Body of pancreas (tissue), 4 donors: ENCODE measurements at regions of chrX and their contacts with region 1.

Region 1: DNA sequence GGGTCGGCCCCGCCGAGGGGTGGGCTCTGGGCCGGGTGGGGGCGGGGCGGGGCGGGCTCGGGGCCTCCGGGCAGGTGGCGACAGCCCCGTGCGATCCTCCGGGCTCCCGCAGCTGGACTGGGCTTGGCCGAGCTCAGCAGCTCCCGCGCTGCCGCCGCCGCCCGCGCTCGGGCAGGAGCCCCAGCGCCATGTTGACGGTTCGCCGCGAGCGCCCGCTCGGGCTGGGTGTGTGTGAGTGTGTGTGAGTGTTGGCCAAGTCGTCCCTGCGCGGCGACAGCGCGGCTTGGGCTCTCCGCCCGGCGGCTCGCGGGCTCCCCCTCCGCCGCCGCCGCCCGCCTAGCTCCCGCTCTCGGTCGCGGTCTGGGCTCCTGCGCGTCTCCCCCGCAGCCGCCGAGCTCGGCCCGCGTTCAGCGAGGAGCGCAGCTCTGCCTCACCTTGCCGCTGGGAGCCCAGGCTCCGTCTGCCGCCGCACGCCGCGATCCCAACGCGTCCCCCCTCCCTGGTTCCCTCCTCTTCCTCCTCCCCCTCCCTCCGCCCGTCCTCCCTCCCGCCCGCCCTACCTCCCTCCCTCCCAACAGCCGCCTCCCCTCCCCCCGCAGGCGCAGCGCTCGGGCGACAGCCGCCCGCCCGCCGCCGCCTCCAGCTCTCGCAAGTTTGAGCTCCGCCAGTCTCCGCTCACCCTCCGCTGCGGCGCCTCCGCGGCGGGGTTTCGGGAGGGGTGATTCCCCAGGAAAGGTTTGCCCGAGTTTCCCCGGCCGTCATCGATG is at the start of gene BCOR:
- DNase-seq: peak; percentile 79 to 85 (median 82)
- ATAC-seq: peak; percentile 76
- H3K4me3 ChIP-seq: peak within 1 kb of the TSS; percentile 18 to 39
- H3K27ac ChIP-seq: peak within 1 kb of the TSS; percentile 83 to 94 (median 90)
- H3K4me1 ChIP-seq: peaks cover 19% of the 10 kb centered on the region
- H3K27me3 ChIP-seq: no peaks in the 10 kb centered on the region
- CTCF ChIP-seq: peak in 1 of 7 experiments; percentile 4
- POLR2A ChIP-seq: peak; percentile 80 to 92 (median 87)
- total RNA-seq, gene BCOR: 13.2 to 23.6 TPM

Region 2: GRCh38 chrX:40153335-40154249 is 55.9 kb after region 1 on chrX:
- intact Hi-C with region 1: loop called (anchors 10 kb)
- DNase-seq: peak; percentile 53 to 73 (median 61)
- ATAC-seq: peak; percentile 39
- H3K4me3 ChIP-seq: no peak overlapping the region
- H3K27ac ChIP-seq: peak overlapping the region; percentile 52 to 86 (median 67)
- H3K4me1 ChIP-seq: peaks cover 27% of the 10 kb centered on the region
- H3K27me3 ChIP-seq: no peaks in the 10 kb centered on the region
- CTCF ChIP-seq: peak in 3 of 7 experiments; percentile 8 to 14 (median 13)
- POLR2A ChIP-seq: peak; percentile 8 to 51 (median 38)